Activated CD4-positive, alpha-beta memory T cell treated with anti-CD3 and anti-CD28 coated beads, Interleukin-2, amount 10 ng/mL, durations not matched to agents 7 days and 5 days (primary cell): ENCODE measurements at regions of chr17 and their contacts with region 1.

Region 1: DNA sequence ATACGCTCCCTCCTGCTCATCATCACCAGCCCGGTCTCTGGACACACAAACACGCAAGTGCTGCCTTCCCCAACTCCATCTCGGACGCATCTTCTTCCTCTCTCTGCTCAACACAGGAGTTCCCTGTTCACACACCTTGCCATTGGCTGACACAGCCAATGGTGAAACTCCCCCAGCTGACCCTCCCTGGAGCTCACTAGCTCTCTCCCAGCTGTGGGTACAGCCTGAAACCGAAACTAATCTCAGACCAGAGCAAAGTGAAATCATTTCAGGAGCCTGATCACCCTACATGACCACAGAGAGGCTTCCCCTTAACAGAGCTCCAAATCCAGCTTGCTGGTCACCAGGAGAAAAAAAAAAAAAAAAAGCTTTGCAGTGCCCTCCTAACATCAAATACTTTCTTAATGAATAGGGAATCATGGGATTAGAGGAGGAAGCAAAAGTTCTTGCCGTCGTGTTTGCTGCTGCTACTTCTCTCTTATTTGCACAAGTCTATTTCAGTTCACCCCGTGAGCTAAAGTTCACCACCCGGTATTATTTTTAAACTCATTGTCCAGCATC is 8.3 kb downstream of the CUEDC1 start:
- DNase-seq: peak; percentile 49
- H3K4me3 Mint-ChIP-seq: peak overlapping the region; percentile 57
- H3K27ac Mint-ChIP-seq: no peak overlapping the region
- H3K4me1 Mint-ChIP-seq: peaks cover 43% of the 10 kb centered on the region
- H3K27me3 Mint-ChIP-seq: peaks cover 41% of the 10 kb centered on the region

Region 2: GRCh38 chr17:57881093-57881531 is 65.8 kb before region 1 on chr17:
- CTCF ChIA-PET with region 1: no interaction called
- POLR2A ChIA-PET with region 1: no interaction called
- DNase-seq: no peak
- H3K4me3 Mint-ChIP-seq: no peak overlapping the region
- H3K27ac Mint-ChIP-seq: no peak overlapping the region
- H3K4me1 Mint-ChIP-seq: peaks cover 8% of the 10 kb centered on the region
- H3K27me3 Mint-ChIP-seq: peaks cover 22% of the 10 kb centered on the region

Region 3: GRCh38 chr17:57892146-57892828 is 54.6 kb before region 1 on chr17:
- CTCF ChIA-PET with region 1: interaction called, 10 read pairs
- POLR2A ChIA-PET with region 1: no interaction called
- DNase-seq: peak; percentile 84
- H3K4me3 Mint-ChIP-seq: no peak overlapping the region
- H3K27ac Mint-ChIP-seq: no peak overlapping the region
- H3K4me1 Mint-ChIP-seq: peaks cover 11% of the 10 kb centered on the region
- H3K27me3 Mint-ChIP-seq: peaks cover 8% of the 10 kb centered on the region

Region 4: GRCh38 chr17:57911834-57912673 is 34.8 kb before region 1 on chr17:
- CTCF ChIA-PET with region 1: no interaction called
- POLR2A ChIA-PET with region 1: no interaction called
- DNase-seq: no peak
- H3K4me3 Mint-ChIP-seq: no peak overlapping the region
- H3K27ac Mint-ChIP-seq: no peak overlapping the region
- H3K4me1 Mint-ChIP-seq: no peaks in the 10 kb centered on the region
- H3K27me3 Mint-ChIP-seq: peaks cover 7% of the 10 kb centered on the region